Dendritic cell treated with granulocyte-macrophage colony-stimulating factor and Interleukin-4, amounts not matched to agents 40 ng/mL and 50 ng/mL, for 4 days (primary cell): ENCODE measurements at regions of chr17 and their contacts with region 1.

Region 1: DNA sequence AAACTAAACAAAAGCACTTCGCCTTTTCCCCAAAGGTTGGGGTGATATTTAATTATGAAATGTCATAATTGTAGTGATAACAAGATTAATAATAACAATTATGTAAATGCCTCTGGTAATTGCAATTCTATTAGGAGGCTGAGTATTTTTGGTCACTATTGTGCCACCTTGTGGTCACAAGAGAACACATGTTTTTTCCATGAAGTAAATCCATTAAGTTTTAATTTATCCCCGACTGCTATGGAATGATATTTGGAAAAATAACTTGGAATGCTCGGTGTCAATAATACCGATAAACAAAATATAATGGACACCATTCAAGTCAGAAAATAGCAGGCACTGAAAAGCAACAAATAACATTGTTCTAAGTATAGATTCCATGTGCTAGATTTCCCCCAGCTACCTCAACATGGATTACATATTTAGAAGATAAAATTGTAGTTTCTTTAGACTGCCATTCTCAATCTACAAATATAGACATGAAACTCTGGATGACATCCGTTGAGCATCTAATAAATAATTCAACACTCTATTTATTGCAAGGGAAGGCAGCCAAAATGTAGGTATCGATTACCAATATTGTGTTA is 25.0 kb upstream of the KCNJ2 start:
- H3K4me3 Mint-ChIP-seq: no peak overlapping the region
- H3K27ac Mint-ChIP-seq: no peak overlapping the region
- H3K4me1 Mint-ChIP-seq: no peaks in the 10 kb centered on the region
- H3K27me3 Mint-ChIP-seq: peaks cover 2% of the 10 kb centered on the region

Region 2: DNA sequence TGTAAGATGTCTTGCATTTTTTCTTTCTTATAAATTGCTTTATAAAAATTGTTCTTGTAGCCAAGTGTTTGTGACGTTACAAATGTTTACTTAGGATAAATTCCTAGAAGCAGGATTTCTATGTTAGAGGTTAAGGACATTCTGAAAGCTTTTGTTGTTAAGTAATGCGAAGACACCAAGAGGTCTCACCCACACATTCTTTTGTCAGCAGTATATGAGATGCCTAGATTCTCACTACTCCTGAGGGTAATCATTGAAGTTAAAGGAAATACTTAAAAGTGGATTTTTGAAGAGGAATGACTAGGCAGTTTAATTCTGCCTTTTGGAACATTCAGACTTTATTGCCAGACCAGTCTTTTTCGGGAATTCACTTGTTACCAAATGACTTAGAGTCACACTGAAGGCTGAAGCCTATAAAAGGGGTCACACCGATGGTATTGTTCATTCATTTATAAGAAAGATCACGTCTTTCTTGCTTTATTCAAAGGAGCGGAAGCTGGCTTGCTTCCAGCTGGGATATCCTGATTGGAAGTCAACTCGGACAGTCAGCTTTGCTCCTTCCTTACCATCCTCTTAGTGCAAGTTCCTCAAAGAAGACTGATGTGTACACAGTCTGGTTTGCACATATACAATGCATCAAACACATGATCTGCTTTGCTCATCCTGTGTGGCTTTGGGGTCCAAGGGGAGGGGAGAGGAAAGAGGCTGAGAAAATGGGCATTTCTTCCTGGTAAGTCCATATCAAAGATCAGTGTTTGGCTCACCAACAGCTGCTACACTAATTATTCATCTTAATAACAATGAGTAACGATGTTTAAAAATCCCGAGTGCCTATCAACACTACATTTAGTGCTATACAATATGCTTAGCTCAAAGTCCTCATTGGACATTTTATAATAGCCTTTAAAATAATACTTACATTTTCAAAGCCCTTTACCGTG is 569.8 kb before region 1 on chr17:
- intact Hi-C with region 1: loop called (anchors 1 kb)
- H3K4me3 Mint-ChIP-seq: no peak overlapping the region
- H3K27ac Mint-ChIP-seq: no peak overlapping the region
- H3K4me1 Mint-ChIP-seq: no peaks in the 10 kb centered on the region
- H3K27me3 Mint-ChIP-seq: peaks cover 6% of the 10 kb centered on the region

Region 3: GRCh38 chr17:69607162-69607834 is 537.1 kb before region 1 on chr17:
- intact Hi-C with region 1: loop called (anchors 5 kb)
- H3K4me3 Mint-ChIP-seq: peak overlapping the region; percentile 9
- H3K27ac Mint-ChIP-seq: peak overlapping the region; percentile 43
- H3K4me1 Mint-ChIP-seq: peaks cover 19% of the 10 kb centered on the region
- H3K27me3 Mint-ChIP-seq: no peaks in the 10 kb centered on the region

Region 4: DNA sequence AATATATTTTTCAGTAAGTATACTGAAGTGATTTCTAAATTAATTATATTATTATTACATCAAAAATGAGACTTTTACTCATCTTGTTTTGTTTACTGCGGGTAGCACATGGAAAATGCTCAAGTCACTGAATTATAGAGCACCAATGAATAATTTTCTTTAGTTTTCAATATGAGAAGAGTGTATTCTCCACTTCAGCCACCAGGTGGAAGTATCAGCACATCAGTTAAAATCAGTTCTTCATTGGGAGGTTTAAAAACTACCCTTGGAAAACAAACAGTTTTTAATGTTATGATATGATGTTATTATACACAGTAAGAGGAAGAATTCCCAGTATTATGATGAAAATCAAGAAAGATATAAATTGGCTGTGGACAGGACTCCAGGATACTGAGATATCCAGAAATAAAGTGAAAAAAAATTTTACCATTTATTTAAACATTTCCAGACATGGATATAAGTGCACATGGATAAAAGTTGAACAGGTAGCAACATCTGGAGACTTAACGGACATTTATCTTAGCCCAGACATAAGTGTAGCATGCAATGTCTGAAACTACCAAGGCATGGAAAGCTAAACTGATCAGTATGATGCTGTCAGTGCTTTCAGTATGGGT is 492.3 kb after region 1 on chr17:
- intact Hi-C with region 1: loop called (anchors 10 kb)
- H3K4me3 Mint-ChIP-seq: no peak overlapping the region
- H3K27ac Mint-ChIP-seq: no peak overlapping the region
- H3K4me1 Mint-ChIP-seq: no peaks in the 10 kb centered on the region
- H3K27me3 Mint-ChIP-seq: peaks cover 15% of the 10 kb centered on the region